ENCODE measurements at regions of chr10 and their contacts with region 1.

Region 1: DNA sequence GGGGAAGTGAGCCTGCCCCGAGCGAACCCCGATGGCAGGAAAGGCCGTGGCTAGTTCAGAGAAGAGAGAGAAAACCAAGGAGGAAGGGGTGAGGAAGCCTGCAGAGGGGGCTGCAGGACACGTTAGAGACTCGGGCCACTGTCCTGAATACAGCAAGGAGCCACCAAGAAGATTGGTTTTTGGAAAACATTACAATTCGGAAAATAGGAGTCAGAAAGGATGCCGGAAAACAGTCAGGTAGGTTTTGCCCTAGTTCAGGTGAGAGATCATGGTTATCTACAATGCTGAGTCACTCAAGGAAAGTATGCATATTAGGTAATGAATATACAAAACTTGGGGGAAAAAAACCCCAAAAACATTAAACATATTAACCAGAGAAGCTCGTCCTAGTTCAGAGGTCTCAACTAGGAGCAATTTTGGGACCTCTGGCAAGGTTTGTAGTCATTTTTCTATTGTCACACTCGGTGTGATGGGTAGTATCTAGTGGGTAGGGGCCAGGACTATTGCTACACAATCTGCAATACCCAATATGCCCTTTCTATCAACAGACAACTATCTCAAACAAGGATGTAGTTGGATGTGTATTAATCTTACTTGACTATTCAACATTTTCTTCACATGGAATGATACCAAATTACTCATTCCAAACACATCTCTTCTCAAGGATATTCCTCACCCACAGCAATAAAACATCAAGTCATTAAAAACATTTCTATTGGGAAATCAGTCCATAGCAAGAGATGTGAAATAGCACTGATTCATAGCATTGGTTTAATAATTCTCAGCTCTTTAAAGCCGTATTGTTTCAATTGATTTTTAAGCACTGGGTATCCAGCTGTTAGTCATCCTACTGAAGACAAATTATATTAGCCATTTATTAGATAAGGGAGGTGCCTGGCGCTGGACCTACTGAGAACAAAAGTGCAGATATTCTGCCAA is 74.4 kb upstream of the RSU1 start:
- DNase-seq: peak; percentile 77
- ATAC-seq: peak; percentile 85
- H3K4me3 ChIP-seq: peak overlapping the region in 1 of 2 experiments; percentile 18; a peak in 2 of 4 replicates
- H3K27ac ChIP-seq: peak overlapping the region; percentile 96
- H3K4me1 ChIP-seq: peaks cover 37% of the 10 kb centered on the region
- H3K27me3 ChIP-seq: no peaks in the 10 kb centered on the region
- CTCF ChIP-seq: peak; percentile 76

Region 2: DNA sequence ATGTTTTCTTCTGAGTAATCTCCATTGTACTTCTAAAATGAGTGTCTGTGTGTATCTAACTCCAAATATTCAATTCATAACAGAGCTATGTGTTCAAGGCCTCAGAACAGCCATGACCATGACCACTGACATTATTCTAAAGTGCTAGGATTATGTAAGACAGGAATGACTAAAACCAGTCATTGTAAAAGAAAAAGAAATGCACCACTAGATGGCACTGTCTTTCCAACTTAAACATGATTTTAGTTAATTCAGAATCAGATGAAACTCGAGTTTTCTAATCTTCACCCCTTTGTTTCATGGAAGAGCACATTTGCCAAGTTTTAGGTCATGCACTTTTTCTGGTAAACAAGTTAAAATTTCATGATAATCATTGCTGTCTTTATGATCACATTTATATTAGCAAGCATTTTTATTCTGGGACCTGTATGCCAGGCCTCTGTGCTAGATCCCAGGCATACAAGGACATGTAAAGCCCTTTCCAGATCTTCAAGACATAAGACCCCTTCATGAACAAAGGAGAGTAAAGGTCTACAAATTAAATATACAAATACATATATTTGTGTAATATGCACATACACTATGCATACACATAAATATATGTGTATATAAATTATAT is 48.3 kb before region 1 on chr10:
- CTCF ChIA-PET with region 1: no interaction called
- POLR2A ChIA-PET with region 1: no interaction called
- in situ Hi-C with region 1: no loop called
- intact Hi-C with region 1: loop called (anchors 5 kb)
- DNase-seq: peak; percentile 54
- ATAC-seq: peak; percentile 88
- H3K4me3 ChIP-seq: no peak overlapping the region
- H3K27ac ChIP-seq: peak overlapping the region; percentile 75
- H3K4me1 ChIP-seq: peaks cover 9% of the 10 kb centered on the region
- H3K27me3 ChIP-seq: no peaks in the 10 kb centered on the region
- CTCF ChIP-seq: peak; percentile 43; the same call in 1 of the 2 replicates

Region 3: GRCh38 chr10:16965740-16966447 is 74.2 kb after region 1 on chr10:
- CTCF ChIA-PET with region 1: no interaction called
- POLR2A ChIA-PET with region 1: interaction called, 3 read pairs
- in situ Hi-C with region 1: no loop called
- intact Hi-C with region 1: loop called (anchors 5 kb)
- DNase-seq: peak; percentile 84
- ATAC-seq: peak; percentile 91
- H3K4me3 ChIP-seq: peak overlapping the region in 1 of 2 experiments; percentile 5; a peak in 1 of 4 replicates
- H3K27ac ChIP-seq: peak overlapping the region; percentile 99
- H3K4me1 ChIP-seq: peaks cover 43% of the 10 kb centered on the region
- H3K27me3 ChIP-seq: no peaks in the 10 kb centered on the region
- CTCF ChIP-seq: no peak

Region 4: GRCh38 chr10:17023386-17024298 is 132.0 kb after region 1 on chr10:
- CTCF ChIA-PET with region 1: no interaction called
- POLR2A ChIA-PET with region 1: interaction called, 6 read pairs
- in situ Hi-C with region 1: no loop called
- intact Hi-C with region 1: loop called (anchors 5 kb)
- DNase-seq: no peak
- ATAC-seq: peak; percentile 89
- H3K4me3 ChIP-seq: 0 out of 4 replicates have a peak overlapping the region, but pooled peaks of 1 of the 2 experiments have one; percentile 0
- H3K27ac ChIP-seq: peak overlapping the region; percentile 99
- H3K4me1 ChIP-seq: peaks cover 67% of the 10 kb centered on the region
- H3K27me3 ChIP-seq: no peaks in the 10 kb centered on the region
- CTCF ChIP-seq: no peak

Region 5: DNA sequence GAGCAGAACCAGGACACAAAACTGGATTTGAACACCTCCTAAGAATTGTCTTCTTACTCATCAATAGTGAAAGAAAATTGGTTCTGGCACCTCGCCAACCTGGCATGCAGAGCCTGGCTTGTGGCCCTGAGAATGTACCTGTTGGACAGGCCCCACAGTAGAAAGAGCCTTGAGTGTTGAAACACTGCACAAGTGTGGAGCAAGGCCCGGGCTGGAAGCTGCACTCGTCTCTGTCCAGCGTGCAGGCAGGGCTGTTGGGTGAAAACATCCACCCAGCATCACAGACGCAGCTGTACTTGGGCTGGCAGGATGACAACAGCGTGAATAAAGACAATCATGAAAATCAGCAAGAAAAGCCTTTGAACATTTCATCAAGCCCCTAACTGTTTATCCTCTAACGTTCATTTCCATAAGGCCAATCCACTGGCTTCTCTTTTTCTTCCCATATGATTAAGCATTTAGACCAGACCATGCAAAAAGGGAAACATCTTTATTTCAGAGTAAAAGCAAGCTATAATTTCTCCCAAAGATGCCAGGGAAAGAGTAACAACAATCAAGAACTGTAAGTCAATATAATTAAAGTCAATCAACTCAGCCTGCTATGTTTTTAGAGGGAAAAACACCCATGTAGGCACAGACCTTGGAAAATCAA is 222.4 kb after region 1 on chr10:
- CTCF ChIA-PET with region 1: no interaction called
- POLR2A ChIA-PET with region 1: interaction called, 3 read pairs
- in situ Hi-C with region 1: no loop called
- intact Hi-C with region 1: loop called (anchors 5 kb)
- DNase-seq: no peak
- ATAC-seq: peak; percentile 53
- H3K4me3 ChIP-seq: no peak overlapping the region
- H3K27ac ChIP-seq: peak overlapping the region; percentile 99
- H3K4me1 ChIP-seq: peaks cover 39% of the 10 kb centered on the region
- H3K27me3 ChIP-seq: no peaks in the 10 kb centered on the region
- CTCF ChIP-seq: no peak

Region 6: GRCh38 chr10:17228091-17228940 is 336.7 kb after region 1 on chr10 and contains the start of gene VIM:
- CTCF ChIA-PET with region 1: no interaction called
- POLR2A ChIA-PET with region 1: interaction called, 3 read pairs
- in situ Hi-C with region 1: no loop called
- intact Hi-C with region 1: loop called (anchors 2 kb)
- DNase-seq: no peak
- ATAC-seq: peak; percentile 75
- H3K4me3 ChIP-seq: peak within 1 kb of the TSS; percentile 64 to 88
- H3K27ac ChIP-seq: peak within 1 kb of the TSS; percentile 96
- H3K4me1 ChIP-seq: peaks cover 26% of the 10 kb centered on the region
- H3K27me3 ChIP-seq: no peaks in the 10 kb centered on the region
- CTCF ChIP-seq: no peak
- total RNA-seq, gene VIM: 3,436 TPM

Measured in Panc1 (cell line).